Tibial artery (tissue), 4 donors: ENCODE measurements at regions of chr4 and their contacts with region 1.

Region 1: DNA sequence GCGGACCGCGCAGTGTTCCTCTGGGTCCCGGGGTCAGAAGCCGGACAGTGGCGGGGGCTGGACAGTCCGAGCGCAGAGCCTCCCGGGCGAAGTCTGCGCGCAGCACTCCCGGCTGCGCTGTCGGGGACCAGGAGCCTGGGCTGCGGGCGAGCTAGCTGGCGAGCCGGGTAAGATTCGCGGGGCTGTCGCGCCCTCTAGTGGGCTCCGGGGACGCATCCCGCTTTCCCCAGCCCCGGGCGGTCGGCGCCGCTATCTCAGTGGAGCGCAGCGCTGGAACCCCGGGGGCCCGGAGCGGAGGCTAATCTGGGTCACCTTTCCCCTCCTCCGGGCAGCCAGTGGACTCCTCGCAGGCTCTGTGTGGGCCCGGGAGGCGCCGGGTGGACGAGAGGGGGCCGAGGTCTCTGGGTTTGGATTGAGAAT is 4.2 kb downstream of the PDGFRA start:
- DNase-seq: peak; percentile 76 to 91
- H3K4me3 ChIP-seq: peak overlapping the region; percentile 58 to 69
- H3K27ac ChIP-seq: peak overlapping the region; percentile 73 to 82
- H3K4me1 ChIP-seq: peaks cover 15 to 58% (median 43%) of the 10 kb centered on the region in 4 donors
- H3K27me3 ChIP-seq: peaks cover 3 to 45% of the 10 kb centered on the region in 2 donors
- CTCF ChIP-seq: peak; percentile 83 to 85

Region 2: DNA sequence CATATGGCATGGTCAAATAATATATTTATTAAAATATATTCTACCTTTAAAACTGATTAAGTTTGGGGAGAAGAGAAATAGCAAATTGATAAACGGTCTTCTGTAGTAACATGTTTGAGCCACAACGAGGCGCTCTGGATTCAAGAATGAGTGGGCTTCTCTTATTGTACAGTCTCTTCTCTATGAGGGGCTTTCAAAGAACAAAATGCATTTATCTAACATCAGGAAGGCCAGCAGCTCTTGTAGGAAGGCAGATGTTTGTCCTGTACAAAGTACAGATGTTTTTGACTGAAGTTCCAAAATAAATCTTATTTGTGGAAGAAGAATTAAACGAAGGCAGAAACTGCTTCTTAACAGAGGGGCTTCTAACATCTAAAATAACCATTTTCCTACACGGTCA is 1217.6 kb before region 1 on chr4:
- intact Hi-C with region 1: loop called (anchors 10 kb)
- DNase-seq: peak in 1 of 2 donors; percentile 33
- H3K4me3 ChIP-seq: no peak overlapping the region
- H3K27ac ChIP-seq: no peak overlapping the region
- H3K4me1 ChIP-seq: peaks cover 0 to 37% (median 11%) of the 10 kb centered on the region in 4 donors
- H3K27me3 ChIP-seq: no peaks in the 10 kb centered on the region
- CTCF ChIP-seq: peak; percentile 53 to 64

Region 3: DNA sequence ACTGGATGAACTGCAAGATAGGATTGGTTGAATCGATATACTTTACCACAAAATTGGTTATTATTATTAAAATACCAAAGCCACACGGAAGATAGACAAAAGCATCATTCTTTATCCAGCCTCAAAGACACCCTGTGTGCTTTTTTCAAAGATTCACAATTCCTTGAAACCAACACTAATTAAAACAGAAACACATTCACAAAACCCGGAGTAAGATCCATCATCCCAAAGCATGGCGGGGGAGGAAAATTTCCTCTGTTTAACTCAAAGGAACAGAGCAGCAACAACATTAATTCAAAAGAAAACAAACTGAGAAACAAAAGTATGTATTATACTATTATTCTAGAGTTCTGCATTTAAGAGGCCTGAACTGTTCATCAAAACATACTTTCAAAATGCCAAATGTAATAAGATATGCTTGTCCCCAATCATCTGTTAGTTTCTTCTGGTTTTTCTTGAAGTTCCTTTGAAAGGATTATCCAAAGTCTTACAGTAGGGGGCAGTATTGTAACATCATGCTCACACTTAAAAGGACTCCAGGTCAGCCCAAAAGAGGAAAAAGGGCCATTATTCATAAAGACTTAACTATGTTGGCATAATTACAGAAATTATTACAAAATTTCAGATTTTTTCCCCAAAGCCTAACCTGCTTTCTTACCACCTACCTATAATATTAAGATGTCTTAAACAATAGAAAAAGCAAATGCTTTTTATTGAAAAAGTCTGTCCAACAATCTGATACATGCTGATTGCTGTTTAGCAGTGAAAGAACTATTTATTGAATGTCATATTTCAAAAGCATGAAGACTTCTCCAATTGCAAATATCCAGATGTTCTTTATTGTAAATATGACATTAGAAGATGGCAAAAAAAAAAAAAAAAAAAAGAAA is 1036.2 kb before region 1 on chr4:
- intact Hi-C with region 1: loop called (anchors 10 kb)
- DNase-seq: no peak
- H3K4me3 ChIP-seq: no peak overlapping the region
- H3K27ac ChIP-seq: no peak overlapping the region
- H3K4me1 ChIP-seq: no peaks in the 10 kb centered on the region
- H3K27me3 ChIP-seq: no peaks in the 10 kb centered on the region
- CTCF ChIP-seq: peak; percentile 67 to 80

Region 4: DNA sequence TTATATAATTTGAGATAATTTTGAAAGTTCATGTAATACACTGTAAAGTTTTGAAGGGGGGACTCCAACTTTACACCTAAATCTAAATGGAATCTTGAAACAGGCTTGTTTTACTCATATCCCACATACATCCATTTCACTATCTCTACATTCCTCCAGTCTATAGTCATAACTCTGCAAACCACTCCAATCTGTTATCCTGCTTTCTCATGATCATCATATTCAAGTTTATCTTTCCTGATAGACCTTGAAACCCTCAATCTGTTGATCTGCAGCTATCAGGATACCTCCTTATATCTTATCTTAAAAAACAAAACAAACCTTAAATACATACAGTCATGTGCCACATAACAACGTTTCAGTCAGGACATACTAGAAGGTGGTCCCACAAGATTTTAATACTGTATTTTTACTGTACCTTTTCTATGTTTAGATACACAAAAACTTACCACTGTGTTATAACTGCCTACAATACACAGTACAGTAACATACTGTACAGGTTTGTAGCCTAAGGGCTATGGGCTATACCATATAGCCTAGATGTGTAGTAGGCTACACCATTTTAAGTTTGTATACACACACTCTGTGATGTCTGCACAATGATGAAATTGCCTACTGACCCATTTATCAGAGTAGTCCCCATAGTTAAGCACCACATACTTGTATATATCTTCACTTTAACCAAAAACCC is 182.9 kb before region 1 on chr4:
- intact Hi-C with region 1: no loop called
- DNase-seq: no peak
- H3K4me3 ChIP-seq: no peak overlapping the region
- H3K27ac ChIP-seq: no peak overlapping the region
- H3K4me1 ChIP-seq: peaks cover 0 to 68% (median 16%) of the 10 kb centered on the region in 4 donors
- H3K27me3 ChIP-seq: no peaks in the 10 kb centered on the region
- CTCF ChIP-seq: no peak

Region 5: DNA sequence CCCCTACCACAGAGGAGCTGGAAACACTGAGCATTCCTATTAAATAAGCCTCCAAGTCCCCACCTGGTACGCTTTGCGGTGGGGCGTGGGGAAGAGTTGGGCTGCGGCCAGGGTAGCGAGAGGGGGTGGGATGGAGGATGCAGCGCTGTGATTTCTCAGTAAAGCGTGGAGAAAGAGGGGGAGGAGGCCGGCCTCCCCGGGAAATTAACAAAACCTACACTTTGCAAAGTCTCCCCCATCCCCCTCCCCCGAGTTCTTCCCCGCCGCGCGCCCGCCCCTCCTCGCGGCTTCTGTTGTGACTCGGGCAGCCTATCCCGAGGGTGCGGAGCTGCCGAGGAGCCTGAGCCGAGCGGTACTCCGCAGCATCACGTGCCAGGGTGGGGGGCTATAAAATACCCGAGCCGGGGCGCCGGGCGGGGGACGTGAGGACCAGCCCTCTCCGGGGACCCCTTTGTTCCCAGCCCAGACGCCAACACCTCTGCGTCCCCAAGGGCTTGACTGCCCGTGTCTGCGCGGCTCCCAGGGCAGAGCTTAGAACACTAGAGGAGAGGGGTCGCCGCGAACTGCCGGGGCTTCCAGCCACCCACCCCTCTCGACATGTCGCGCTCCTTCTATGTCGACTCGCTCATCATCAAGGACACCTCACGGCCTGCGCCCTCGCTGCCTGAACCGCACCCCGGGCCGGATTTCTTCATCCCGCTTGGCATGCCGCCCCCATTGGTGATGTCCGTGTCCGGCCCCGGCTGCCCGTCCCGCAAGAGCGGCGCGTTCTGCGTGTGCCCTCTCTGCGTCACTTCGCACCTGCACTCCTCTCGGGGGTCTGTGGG is 133.3 kb before region 1 on chr4 and contains the start of gene GSX2:
- intact Hi-C with region 1: loop called (anchors 5 kb)
- DNase-seq: peak in 1 of 2 donors; percentile 40
- H3K4me3 ChIP-seq: peak within 1 kb of the TSS; percentile 27 to 46
- H3K27ac ChIP-seq: no peak within 1 kb of the TSS
- H3K4me1 ChIP-seq: peaks cover 0 to 40% (median 35%) of the 10 kb centered on the region in 4 donors
- H3K27me3 ChIP-seq: peaks cover 0 to 89% of the 10 kb centered on the region in 2 donors
- CTCF ChIP-seq: no peak